AG04449 (cell line): ENCODE measurements at regions of chr9 and their contacts with region 1.

Region 1: DNA sequence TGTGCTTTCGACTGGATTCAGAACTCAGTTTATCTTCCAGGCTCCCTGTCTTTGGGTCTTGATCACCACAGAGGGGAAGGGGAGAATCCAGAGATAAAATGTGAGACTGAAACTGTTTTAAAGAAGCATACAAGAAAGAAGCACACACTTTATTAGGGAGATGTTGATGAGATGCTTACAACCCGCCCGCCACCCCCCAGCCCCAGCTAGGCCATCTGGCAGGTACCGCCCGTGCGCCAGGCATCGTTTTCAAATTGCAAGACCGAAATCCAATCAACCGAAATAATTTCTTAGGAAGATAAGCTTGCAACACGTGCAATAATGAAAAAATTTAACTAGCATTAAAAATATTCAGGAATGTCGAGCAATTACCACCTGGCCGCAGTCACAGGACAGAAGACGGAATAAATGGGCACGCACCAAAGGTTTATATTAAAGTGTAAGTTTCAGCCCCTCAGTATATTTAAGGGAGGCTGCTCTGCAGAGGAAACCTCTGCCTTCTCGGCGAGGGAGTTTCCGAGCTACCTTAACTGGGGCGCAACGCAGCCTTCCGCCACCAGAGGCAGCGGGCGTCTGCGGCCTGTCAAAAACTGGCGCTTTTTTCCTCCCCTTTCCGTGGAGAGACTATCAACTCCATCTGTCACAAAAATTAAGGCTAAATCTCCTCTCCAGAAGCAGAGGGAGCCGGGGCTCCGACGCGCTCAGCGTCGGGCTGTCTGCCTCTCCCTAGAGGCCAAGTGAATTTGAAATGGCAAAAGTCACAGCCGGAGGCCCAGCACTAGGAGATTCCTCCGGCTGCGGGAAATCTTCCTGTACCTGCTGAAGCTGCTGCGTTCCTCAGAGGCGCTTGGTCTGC is 996 bp upstream of the GAS1 start:
- DNase-seq: no peak
- H3K4me3 ChIP-seq: peak overlapping the region; percentile 94
- CTCF ChIP-seq: peak; percentile 93

Region 2: GRCh38 chr9:86486891-86487837 is 461.1 kb before region 1 on chr9:
- CTCF ChIA-PET with region 1: interaction called, 60 read pairs
- POLR2A ChIA-PET with region 1: interaction called, 3 read pairs
- DNase-seq: peak; percentile 26
- H3K4me3 ChIP-seq: no peak overlapping the region
- CTCF ChIP-seq: peak; percentile 49

Region 3: GRCh38 chr9:86766912-86767311 is 181.4 kb before region 1 on chr9:
- CTCF ChIA-PET with region 1: no interaction called
- POLR2A ChIA-PET with region 1: no interaction called
- DNase-seq: peak; percentile 61
- H3K4me3 ChIP-seq: no peak overlapping the region
- CTCF ChIP-seq: no peak

Region 4: DNA sequence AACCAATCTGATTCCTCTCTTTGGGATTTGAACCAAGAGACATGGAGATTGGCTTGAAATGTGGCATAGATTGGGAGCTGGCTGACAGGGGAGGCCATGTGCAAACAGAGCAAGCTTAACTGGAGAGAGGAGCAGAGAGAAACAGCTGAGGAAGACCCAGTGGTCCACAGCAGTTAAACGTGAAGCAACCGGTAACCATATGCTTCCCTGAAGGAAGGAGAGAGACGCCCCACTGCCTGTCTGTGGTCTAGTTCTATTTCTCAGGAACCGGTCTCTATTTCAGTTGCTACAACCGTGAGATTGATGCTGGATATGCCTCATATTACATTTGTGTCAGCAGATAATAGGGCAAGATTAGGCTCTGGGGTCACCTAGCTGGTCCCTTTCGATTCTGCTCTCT is 12.6 kb after region 1 on chr9:
- CTCF ChIA-PET with region 1: interaction called, 37 read pairs
- POLR2A ChIA-PET with region 1: interaction called, 3 read pairs
- DNase-seq: no peak
- H3K4me3 ChIP-seq: no peak overlapping the region
- CTCF ChIP-seq: no peak

Region 5: GRCh38 chr9:87125819-87126218 is 177.5 kb after region 1 on chr9:
- CTCF ChIA-PET with region 1: interaction called, 10 read pairs
- POLR2A ChIA-PET with region 1: no interaction called
- DNase-seq: no peak
- H3K4me3 ChIP-seq: no peak overlapping the region
- CTCF ChIP-seq: no peak

Region 6: GRCh38 chr9:87290241-87291052 is 342.1 kb after region 1 on chr9:
- CTCF ChIA-PET with region 1: interaction called, 5 read pairs
- POLR2A ChIA-PET with region 1: interaction called, 12 read pairs
- DNase-seq: peak; percentile 94
- H3K4me3 ChIP-seq: no peak overlapping the region
- CTCF ChIP-seq: peak; percentile 54